ENCODE measurements at regions of chr9 and their contacts with region 1.

Region 1: GRCh38 chr9:111621895-111622480 is 9.1 kb upstream of the DNAJC25 start:
- DNase-seq: peak; percentile 46
- H3K4me3 Mint-ChIP-seq: no peak overlapping the region
- H3K27ac Mint-ChIP-seq: no peak overlapping the region
- H3K4me1 Mint-ChIP-seq: no peaks in the 10 kb centered on the region
- H3K27me3 Mint-ChIP-seq: peaks cover 9% of the 10 kb centered on the region

Region 2: DNA sequence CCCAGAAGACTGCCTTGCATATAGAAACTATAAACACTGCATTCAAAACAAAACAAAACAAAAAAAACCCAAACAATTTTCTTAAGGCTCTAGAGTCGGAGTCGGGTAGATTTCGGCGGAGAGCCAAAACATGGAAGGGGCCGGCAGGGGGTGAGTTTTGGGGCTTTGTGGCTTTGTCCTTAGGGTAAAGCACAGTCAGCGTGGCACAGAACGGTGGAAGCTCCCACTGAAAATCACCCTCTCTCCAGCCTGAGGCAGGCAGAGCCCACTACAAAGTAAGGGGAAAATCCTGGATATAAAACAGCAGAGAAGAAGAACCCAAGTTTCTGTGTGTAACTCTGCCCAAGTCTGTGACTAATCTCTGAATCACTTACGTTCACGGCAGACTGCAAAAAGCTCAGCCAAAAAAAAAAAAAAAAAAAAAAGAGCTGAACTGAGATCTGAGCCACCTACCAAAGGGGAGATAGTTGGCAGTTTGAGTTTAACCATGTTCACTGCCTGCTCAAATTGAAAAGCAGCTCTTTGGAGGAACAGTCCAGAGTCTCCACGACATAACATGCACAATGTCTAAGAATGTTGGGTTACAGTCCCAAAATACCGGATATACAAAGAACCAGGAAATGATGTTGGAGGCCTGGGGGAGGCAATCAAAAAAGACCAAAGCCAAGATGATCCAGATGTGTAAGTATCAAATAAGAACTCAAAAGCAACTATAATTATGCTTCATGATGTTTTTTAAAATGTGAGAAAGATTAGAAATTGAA is 265.3 kb before region 1 on chr9:
- CTCF ChIA-PET with region 1: no interaction called
- intact Hi-C with region 1: no loop called
- DNase-seq: no peak
- H3K4me3 Mint-ChIP-seq: no peak overlapping the region
- H3K27ac Mint-ChIP-seq: no peak overlapping the region
- H3K4me1 Mint-ChIP-seq: peaks cover 7% of the 10 kb centered on the region
- H3K27me3 Mint-ChIP-seq: no peaks in the 10 kb centered on the region

Region 3: GRCh38 chr9:111691672-111692329 is 69.8 kb after region 1 on chr9:
- CTCF ChIA-PET with region 1: interaction called, 11 read pairs
- intact Hi-C with region 1: no loop called
- DNase-seq: no peak
- H3K4me3 Mint-ChIP-seq: no peak overlapping the region
- H3K27ac Mint-ChIP-seq: no peak overlapping the region
- H3K4me1 Mint-ChIP-seq: peaks cover 3% of the 10 kb centered on the region
- H3K27me3 Mint-ChIP-seq: no peaks in the 10 kb centered on the region

Measured in activated naive CD4-positive, alpha-beta T cell treated with anti-CD3 and anti-CD28 coated beads for 36 hours (primary cell).